Endothelial cell of umbilical vein (primary cell): ENCODE measurements at regions of chr6 and their contacts with region 1.

Region 1: GRCh38 chr6:87472525-87473418 is at the start of gene SLC35A1:
- DNase-seq: peak; percentile 88
- H3K4me3 ChIP-seq: peak within 1 kb of the TSS; percentile 53 to 91 (median 90)
- H3K27ac ChIP-seq: peak within 1 kb of the TSS; percentile 91
- H3K4me1 ChIP-seq: peaks cover 8% of the 10 kb centered on the region
- H3K27me3 ChIP-seq: peaks cover 2% of the 10 kb centered on the region in 2 experiments
- CTCF ChIP-seq: no peak
- POLR2A ChIP-seq: peak; percentile 86
- total RNA-seq, gene SLC35A1: 12.9 and 13.0 TPM in 2 replicates

Region 2: GRCh38 chr6:87322304-87323212 is 150.2 kb before region 1 on chr6 and contains the start of gene SMIM8:
- CTCF ChIA-PET with region 1: no interaction called
- POLR2A ChIA-PET with region 1: no interaction called
- dilution Hi-C with region 1: no loop called
- intact Hi-C with region 1: loop called (anchors 1 kb)
- DNase-seq: peak; percentile 67
- H3K4me3 ChIP-seq: peak within 1 kb of the TSS; percentile 84 to 99 (median 94)
- H3K27ac ChIP-seq: peak within 1 kb of the TSS; percentile 9
- H3K4me1 ChIP-seq: peaks cover 3% of the 10 kb centered on the region
- H3K27me3 ChIP-seq: peaks cover 2 to 4% of the 10 kb centered on the region in 2 experiments
- CTCF ChIP-seq: peak; percentile 95 to 99
- POLR2A ChIP-seq: peak; percentile 77
- total RNA-seq, gene SMIM8: 8.2 and 8.4 TPM in 2 replicates

Region 3: DNA sequence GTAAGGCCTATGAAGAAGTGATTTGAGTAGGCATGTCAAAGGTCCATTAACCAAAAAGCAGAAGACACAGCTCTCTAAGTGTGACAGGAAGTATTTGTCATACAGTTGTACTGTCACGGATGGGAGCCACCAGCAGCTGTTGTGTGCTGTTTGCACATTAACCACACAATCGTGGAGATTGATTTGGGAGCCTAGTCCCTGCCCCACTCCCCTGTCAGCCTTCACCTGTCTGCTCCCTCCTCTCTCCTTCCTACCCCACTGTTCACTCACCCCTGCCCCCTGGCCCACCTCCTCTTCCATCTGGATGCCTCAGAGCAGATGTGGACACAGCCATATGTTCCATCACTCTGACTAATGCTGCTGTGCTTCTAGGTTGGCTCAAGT is 450.2 kb after region 1 on chr6:
- CTCF ChIA-PET with region 1: no interaction called
- POLR2A ChIA-PET with region 1: no interaction called
- dilution Hi-C with region 1: no loop called
- intact Hi-C with region 1: no loop called
- DNase-seq: no peak
- H3K4me3 ChIP-seq: no peak overlapping the region
- H3K27ac ChIP-seq: no peak overlapping the region
- H3K4me1 ChIP-seq: no peaks in the 10 kb centered on the region
- H3K27me3 ChIP-seq: peaks cover 2 to 4% of the 10 kb centered on the region in 2 experiments
- CTCF ChIP-seq: no peak
- POLR2A ChIP-seq: no peak